ENCODE measurements at regions of chr6 and their contacts with region 1.

Region 1: GRCh38 chr6:45677381-45678284 is 299.9 kb upstream of the SUPT3H start:
- DNase-seq: peak; percentile 74
- H3K4me3 Mint-ChIP-seq: peak overlapping the region; percentile 45
- H3K27ac Mint-ChIP-seq: peak overlapping the region; percentile 68
- H3K4me1 Mint-ChIP-seq: peaks cover 33% of the 10 kb centered on the region
- H3K27me3 Mint-ChIP-seq: no peaks in the 10 kb centered on the region

Region 2: DNA sequence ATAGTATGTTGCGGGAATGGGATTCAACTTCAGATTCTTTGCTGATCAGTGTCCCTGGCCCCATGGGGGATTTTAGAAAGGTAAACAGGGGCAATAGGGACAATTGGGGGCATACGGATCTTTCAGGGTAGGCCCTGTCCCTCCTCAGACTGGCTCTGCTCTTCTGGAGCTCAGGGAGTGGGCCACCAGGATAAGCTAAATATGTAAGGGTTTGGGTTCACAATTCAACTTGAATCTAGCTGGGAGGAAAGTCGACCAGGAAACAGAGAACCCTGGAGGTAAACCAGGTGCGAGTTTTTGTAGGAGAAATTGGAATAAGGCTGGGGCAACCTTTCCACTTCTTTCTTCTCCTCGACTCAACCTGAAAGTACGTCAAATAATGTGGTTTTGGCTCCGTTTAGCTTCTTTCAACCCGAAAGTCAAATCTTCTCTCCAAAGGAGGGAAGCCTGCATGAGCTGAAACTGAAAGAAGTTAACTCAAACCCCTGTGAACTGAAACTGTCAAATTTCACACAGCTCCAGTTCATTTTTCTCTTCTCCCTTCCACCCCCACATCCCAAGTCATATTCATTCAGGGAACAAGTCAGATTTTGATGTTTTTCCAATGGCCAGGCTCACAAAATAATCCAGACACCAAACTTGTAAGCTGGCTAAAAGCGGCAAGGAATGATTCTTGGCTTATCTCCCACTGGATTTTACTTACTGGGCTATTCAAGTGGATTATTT is 59.9 kb after region 1 on chr6:
- CTCF ChIA-PET with region 1: no interaction called
- intact Hi-C with region 1: loop called (anchors 1 kb)
- DNase-seq: peak; percentile 38
- H3K4me3 Mint-ChIP-seq: no peak overlapping the region
- H3K27ac Mint-ChIP-seq: peak overlapping the region; percentile 9
- H3K4me1 Mint-ChIP-seq: peaks cover 32% of the 10 kb centered on the region
- H3K27me3 Mint-ChIP-seq: peaks cover 29% of the 10 kb centered on the region

Region 3: DNA sequence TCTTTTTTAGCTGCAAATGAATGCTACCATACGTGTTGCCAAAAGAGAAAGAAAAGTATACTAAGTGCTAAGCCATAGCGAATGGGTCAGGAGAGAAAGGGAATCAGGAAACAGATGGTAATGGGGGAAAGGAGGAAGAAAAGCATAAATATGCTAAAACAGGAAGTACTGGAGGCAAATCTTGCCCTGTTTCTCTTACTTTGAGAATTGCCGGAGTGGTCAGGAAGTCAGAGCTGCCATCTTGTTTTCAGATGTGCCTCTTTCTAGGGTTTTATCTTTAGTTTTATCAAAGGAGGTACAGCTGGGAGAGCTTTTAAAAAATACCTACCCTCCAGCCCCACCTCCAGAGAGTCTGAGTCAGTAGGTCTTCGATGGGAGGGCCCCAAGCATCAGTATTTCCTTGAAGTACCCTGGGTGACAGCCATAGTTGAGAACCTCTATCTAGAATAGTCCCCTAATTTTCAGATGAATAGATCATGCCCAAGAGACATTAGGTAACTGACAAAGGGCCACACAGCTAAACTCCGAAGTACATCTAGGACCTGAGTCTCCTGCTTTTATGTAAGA is 144.7 kb after region 1 on chr6:
- CTCF ChIA-PET with region 1: no interaction called
- intact Hi-C with region 1: loop called (anchors 5 kb)
- DNase-seq: peak; percentile 59
- H3K4me3 Mint-ChIP-seq: peak overlapping the region; percentile 1
- H3K27ac Mint-ChIP-seq: peak overlapping the region; percentile 74
- H3K4me1 Mint-ChIP-seq: peaks cover 19% of the 10 kb centered on the region
- H3K27me3 Mint-ChIP-seq: peaks cover 4% of the 10 kb centered on the region

Measured in activated naive CD4-positive, alpha-beta T cell treated with anti-CD3 and anti-CD28 coated beads for 36 hours (primary cell).